ENCODE measurements at regions of chr1 and their contacts with region 1.

Region 1: GRCh38 chr1:171576144-171576543 is 45.9 kb upstream of the MYOCOS start:
- DNase-seq: no peak
- H3K4me3 ChIP-seq: no peak overlapping the region
- H3K27ac ChIP-seq: no peak overlapping the region
- H3K4me1 ChIP-seq: no peaks in the 10 kb centered on the region
- H3K27me3 ChIP-seq: no peaks in the 10 kb centered on the region
- CTCF ChIP-seq: no peak
- EP300 ChIP-seq: no peak
- POLR2A ChIP-seq: no peak

Region 2: DNA sequence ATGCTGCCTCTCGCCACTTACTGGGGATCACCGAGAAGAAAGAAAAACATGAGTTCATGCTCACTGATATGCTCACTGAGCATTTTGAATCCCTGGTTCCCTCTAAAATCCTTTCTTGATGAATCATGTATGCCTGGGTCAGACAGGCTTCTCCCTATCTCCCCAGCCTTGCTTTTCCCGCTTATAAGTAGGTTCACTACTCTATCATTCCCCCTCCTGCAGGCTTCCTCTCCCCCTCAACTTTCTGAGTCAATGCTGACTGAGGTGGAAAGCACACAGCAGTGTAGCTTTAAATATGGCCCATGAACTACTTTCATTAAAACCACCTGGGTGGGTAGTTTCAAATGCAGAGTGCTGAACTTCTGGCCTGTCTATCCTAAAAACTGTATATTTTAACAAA is 220.4 kb before region 1 on chr1:
- intact Hi-C with region 1: no loop called
- DNase-seq: no peak
- H3K4me3 ChIP-seq: no peak overlapping the region
- H3K27ac ChIP-seq: no peak overlapping the region
- H3K4me1 ChIP-seq: no peaks in the 10 kb centered on the region
- H3K27me3 ChIP-seq: peaks cover 0 to 6% (median 0%) of the 10 kb centered on the region in 4 donors
- CTCF ChIP-seq: no peak
- EP300 ChIP-seq: no peak
- POLR2A ChIP-seq: no peak

Region 3: GRCh38 chr1:171521567-171521966 is 54.6 kb before region 1 on chr1:
- intact Hi-C with region 1: loop called (anchors 10 kb)
- DNase-seq: no peak
- H3K4me3 ChIP-seq: no peak overlapping the region
- H3K27ac ChIP-seq: no peak overlapping the region
- H3K4me1 ChIP-seq: no peaks in the 10 kb centered on the region
- H3K27me3 ChIP-seq: no peaks in the 10 kb centered on the region
- CTCF ChIP-seq: no peak
- EP300 ChIP-seq: no peak
- POLR2A ChIP-seq: no peak

Measured in esophagus muscularis mucosa (tissue), 4 donors.